HepG2 (cell line): ENCODE measurements at regions of chr11 and their contacts with region 1.

Region 1: GRCh38 chr11:66638177-66639065 is at the start of gene RBM4:
- DNase-seq: peak; percentile 99
- ATAC-seq: peak; percentile 93
- H3K4me3 ChIP-seq: peak within 1 kb of the TSS; percentile 87 to 96 (median 90)
- H3K27ac ChIP-seq: peak within 1 kb of the TSS; percentile 95
- H3K4me1 ChIP-seq: peaks cover 63% of the 10 kb centered on the region
- H3K27me3 ChIP-seq: no peaks in the 10 kb centered on the region; a peak in 1 of 5 replicates
- CTCF ChIP-seq: peak; percentile 29; the same call in 1 of the 2 replicates
- EP300 ChIP-seq: no peak
- POLR2A ChIP-seq: peak; percentile 83 to 94
- RAD21 ChIP-seq: 0 out of 2 replicates have a peak, but pooled peaks have one; percentile 24
- total RNA-seq, gene RBM4: 136 and 138 TPM in 2 replicates

Region 2: GRCh38 chr11:66438504-66439466 is 199.6 kb before region 1 on chr11 and contains the start of gene MRPL11:
- CTCF ChIA-PET with region 1: no interaction called
- POLR2A ChIA-PET with region 1: interaction called, 11 read pairs
- in situ Hi-C with region 1: no loop called
- intact Hi-C with region 1: no loop called
- DNase-seq: peak; percentile 92
- ATAC-seq: peak; percentile 94
- H3K4me3 ChIP-seq: peak within 1 kb of the TSS; percentile 78 to 89 (median 84)
- H3K27ac ChIP-seq: peak within 1 kb of the TSS; percentile 88
- H3K4me1 ChIP-seq: peaks cover 33% of the 10 kb centered on the region
- H3K27me3 ChIP-seq: peaks cover 2 to 9% of the 10 kb centered on the region in 2 experiments; a peak in 2 of 5 replicates
- CTCF ChIP-seq: peak; percentile 90
- EP300 ChIP-seq: no peak
- POLR2A ChIP-seq: peak; percentile 67 to 78; a peak in 3 of 4 replicates
- RAD21 ChIP-seq: no peak
- total RNA-seq, gene MRPL11: 176 and 220 TPM in 2 replicates

Region 3: DNA sequence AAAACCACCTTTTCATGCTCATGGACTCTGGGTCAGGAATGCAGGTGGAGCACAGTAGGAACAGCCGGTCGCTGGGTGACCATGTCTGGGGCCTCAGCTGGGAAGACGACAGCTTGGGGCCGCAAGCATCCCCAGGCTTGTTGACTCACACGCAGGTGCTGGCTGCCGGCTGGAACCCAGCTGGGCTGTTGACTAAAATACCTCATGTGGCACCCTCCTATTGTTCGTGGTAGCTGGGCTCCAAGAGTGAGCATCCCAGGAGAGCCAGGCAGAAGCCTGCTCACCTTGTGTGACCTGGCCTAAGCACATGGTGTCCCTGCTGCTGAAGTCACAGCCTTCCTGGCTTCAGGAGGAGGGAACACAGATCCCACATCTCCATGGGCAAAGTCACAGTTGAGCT is 148.8 kb before region 1 on chr11:
- CTCF ChIA-PET with region 1: no interaction called
- POLR2A ChIA-PET with region 1: no interaction called
- in situ Hi-C with region 1: no loop called
- intact Hi-C with region 1: no loop called
- DNase-seq: no peak
- ATAC-seq: no peak
- H3K4me3 ChIP-seq: no peak overlapping the region
- H3K27ac ChIP-seq: no peak overlapping the region
- H3K4me1 ChIP-seq: peaks cover 8% of the 10 kb centered on the region; the same call in 1 of the 2 replicates
- H3K27me3 ChIP-seq: no peaks in the 10 kb centered on the region
- CTCF ChIP-seq: no peak
- EP300 ChIP-seq: no peak
- POLR2A ChIP-seq: no peak
- RAD21 ChIP-seq: no peak

Region 4: GRCh38 chr11:66545701-66546367 is 92.6 kb before region 1 on chr11 and contains the start of gene ZDHHC24:
- CTCF ChIA-PET with region 1: no interaction called
- POLR2A ChIA-PET with region 1: interaction called, 13 read pairs
- in situ Hi-C with region 1: no loop called
- intact Hi-C with region 1: no loop called
- DNase-seq: peak; percentile 92
- ATAC-seq: peak; percentile 92
- H3K4me3 ChIP-seq: peak within 1 kb of the TSS; percentile 69 to 93 (median 83)
- H3K27ac ChIP-seq: peak within 1 kb of the TSS; percentile 53
- H3K4me1 ChIP-seq: peaks cover 39% of the 10 kb centered on the region
- H3K27me3 ChIP-seq: peaks cover 0 to 7% of the 10 kb centered on the region in 2 experiments; a peak in 4 of 5 replicates
- CTCF ChIP-seq: 0 out of 2 replicates have a peak, but pooled peaks have one; percentile 28
- EP300 ChIP-seq: no peak
- POLR2A ChIP-seq: peak; percentile 70 to 73
- RAD21 ChIP-seq: peak; percentile 32; the same call in 1 of the 2 replicates
- total RNA-seq, gene ZDHHC24: 1.9 and 4.3 TPM in 2 replicates

Region 5: DNA sequence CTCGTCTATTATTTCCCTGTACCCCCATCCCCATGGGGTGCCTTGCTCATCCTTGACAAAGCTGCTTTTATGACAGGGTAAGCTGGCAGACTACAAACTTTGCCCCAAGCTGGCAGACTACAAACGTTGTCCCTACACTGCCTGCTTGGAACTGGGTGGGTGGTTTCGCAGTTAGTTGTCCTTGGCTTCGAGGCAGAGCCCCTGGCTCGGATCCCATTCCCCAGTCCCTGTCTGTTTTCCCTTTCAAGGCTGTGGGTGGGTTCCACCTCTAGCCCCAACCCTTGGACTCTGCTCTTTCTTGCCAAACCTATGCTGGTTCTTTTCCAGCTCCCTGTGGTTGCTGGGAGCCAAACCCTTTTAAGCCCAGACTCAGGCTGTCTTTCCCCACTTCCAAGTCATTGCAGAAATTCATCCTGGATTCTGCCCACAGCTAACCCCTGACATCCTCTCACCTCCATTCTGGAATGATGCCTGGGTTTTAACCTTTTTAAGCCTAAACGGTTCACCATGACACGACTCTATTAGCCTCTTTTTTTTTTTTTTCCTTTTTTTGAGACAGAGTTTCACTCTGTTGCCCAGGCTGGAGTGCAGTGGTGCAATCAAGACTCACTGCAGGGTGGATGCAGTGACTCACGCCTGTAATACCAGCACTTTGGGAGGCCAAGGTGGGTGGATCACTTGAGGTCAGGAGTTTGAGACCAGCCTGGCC is 31.1 kb before region 1 on chr11:
- CTCF ChIA-PET with region 1: no interaction called
- POLR2A ChIA-PET with region 1: interaction called, 23 read pairs
- in situ Hi-C with region 1: no loop called
- intact Hi-C with region 1: no loop called
- DNase-seq: peak; percentile 82
- ATAC-seq: peak; percentile 91
- H3K4me3 ChIP-seq: peak overlapping the region in 1 of 3 experiments; percentile 14; a peak in 2 of 6 replicates
- H3K27ac ChIP-seq: peak overlapping the region; percentile 70
- H3K4me1 ChIP-seq: peaks cover 23% of the 10 kb centered on the region
- H3K27me3 ChIP-seq: no peaks in the 10 kb centered on the region
- CTCF ChIP-seq: no peak
- EP300 ChIP-seq: peak in 1 of 2 experiments; percentile 54; a peak in 1 of 4 replicates
- POLR2A ChIP-seq: no peak
- RAD21 ChIP-seq: 0 out of 2 replicates have a peak, but pooled peaks have one; percentile 12

Region 6: GRCh38 chr11:66625041-66625751 is 13.2 kb before region 1 on chr11:
- CTCF ChIA-PET with region 1: no interaction called
- POLR2A ChIA-PET with region 1: interaction called, 211 read pairs
- in situ Hi-C with region 1: no loop called
- intact Hi-C with region 1: no loop called
- DNase-seq: no peak
- ATAC-seq: peak; percentile 5; the same call in 2 of the 3 replicates
- H3K4me3 ChIP-seq: no peak overlapping the region
- H3K27ac ChIP-seq: no peak overlapping the region
- H3K4me1 ChIP-seq: peaks cover 35% of the 10 kb centered on the region
- H3K27me3 ChIP-seq: no peaks in the 10 kb centered on the region
- CTCF ChIP-seq: no peak
- EP300 ChIP-seq: no peak
- POLR2A ChIP-seq: no peak; a peak in 2 of 4 replicates
- RAD21 ChIP-seq: no peak